Activated CD8-positive, alpha-beta T cell treated with anti-CD3 and anti-CD28 coated beads, Interleukin-2, amount 10 ng/mL, durations not matched to agents 7 days and 5 days (primary cell): ENCODE measurements at regions of chr18 and their contacts with region 1.

Region 1: GRCh38 chr18:62637807-62638687 is 77.3 kb upstream of the PHLPP1 start:
- DNase-seq: peak; percentile 63
- ATAC-seq: peak; percentile 79
- H3K4me3 Mint-ChIP-seq: no peak overlapping the region
- H3K27ac Mint-ChIP-seq: no peak overlapping the region
- H3K4me1 Mint-ChIP-seq: peaks cover 9% of the 10 kb centered on the region
- H3K27me3 Mint-ChIP-seq: peaks cover 19% of the 10 kb centered on the region

Region 2: GRCh38 chr18:62584241-62585120 is 53.6 kb before region 1 on chr18:
- CTCF ChIA-PET with region 1: interaction called, 10 read pairs
- POLR2A ChIA-PET with region 1: no interaction called
- DNase-seq: peak; percentile 90
- ATAC-seq: peak; percentile 91
- H3K4me3 Mint-ChIP-seq: peak overlapping the region; percentile 31
- H3K27ac Mint-ChIP-seq: peak overlapping the region; percentile 78
- H3K4me1 Mint-ChIP-seq: peaks cover 39% of the 10 kb centered on the region
- H3K27me3 Mint-ChIP-seq: no peaks in the 10 kb centered on the region

Region 3: DNA sequence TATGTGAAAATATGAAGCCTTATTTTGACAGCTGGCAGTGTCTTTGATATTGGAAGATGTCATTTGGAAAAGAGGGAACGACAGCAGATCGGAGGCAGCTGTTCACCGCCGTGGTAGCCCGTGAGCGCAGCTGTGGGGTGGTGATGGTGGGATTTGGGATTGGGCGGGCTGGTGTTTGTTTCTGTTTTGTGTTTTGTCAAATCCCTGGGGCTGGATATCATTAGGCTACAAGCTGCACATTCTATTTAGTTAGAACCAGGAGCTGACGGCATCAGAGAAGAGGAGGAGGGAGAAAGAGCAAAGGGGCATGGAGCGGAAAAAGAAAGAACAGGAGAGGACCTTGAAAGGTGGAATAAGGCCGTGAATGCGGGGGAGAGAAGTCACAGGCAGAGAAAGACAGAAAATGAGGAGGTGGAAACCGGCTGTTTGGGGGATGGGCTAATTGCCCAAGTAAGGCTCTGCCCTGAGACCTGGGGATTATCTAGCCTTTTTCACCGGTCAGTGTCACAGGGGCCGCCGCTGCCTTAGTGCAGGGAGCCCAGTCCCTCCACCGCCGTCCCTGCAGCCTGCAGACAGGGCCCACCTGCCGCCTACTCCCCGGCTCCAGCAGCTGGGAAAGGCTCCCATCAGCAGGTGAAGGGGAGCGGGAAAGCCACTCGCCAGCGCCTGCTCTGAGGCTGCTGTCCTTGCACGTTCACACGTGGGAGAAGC is 27.2 kb before region 1 on chr18:
- CTCF ChIA-PET with region 1: no interaction called
- POLR2A ChIA-PET with region 1: no interaction called
- DNase-seq: no peak
- ATAC-seq: peak; percentile 27
- H3K4me3 Mint-ChIP-seq: no peak overlapping the region
- H3K27ac Mint-ChIP-seq: no peak overlapping the region
- H3K4me1 Mint-ChIP-seq: no peaks in the 10 kb centered on the region
- H3K27me3 Mint-ChIP-seq: peaks cover 24% of the 10 kb centered on the region

Region 4: DNA sequence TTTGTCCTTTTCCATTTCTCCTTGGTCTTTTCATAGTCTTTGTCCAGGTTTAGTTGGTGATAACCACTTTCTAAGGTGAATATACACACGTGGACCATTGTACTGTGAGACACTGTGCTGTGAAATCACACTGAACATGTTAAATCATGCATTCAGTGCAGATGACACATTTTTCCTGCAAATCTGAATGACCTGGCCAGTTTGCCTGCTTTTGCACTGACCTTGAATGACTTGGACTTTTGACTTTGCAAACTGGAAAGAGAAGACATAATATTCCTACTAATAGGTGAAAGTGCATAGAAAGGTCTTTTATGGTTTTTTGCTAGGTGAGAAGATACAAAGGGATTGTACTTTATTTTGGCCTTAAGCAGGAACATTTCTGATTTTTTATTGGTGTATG is 55.6 kb after region 1 on chr18:
- CTCF ChIA-PET with region 1: no interaction called
- POLR2A ChIA-PET with region 1: no interaction called
- DNase-seq: no peak
- ATAC-seq: no peak
- H3K4me3 Mint-ChIP-seq: no peak overlapping the region
- H3K27ac Mint-ChIP-seq: no peak overlapping the region
- H3K4me1 Mint-ChIP-seq: no peaks in the 10 kb centered on the region
- H3K27me3 Mint-ChIP-seq: peaks cover 12% of the 10 kb centered on the region

Region 5: GRCh38 chr18:62809900-62810299 is 171.9 kb after region 1 on chr18:
- CTCF ChIA-PET with region 1: no interaction called
- POLR2A ChIA-PET with region 1: no interaction called
- DNase-seq: no peak
- ATAC-seq: no peak
- H3K4me3 Mint-ChIP-seq: no peak overlapping the region
- H3K27ac Mint-ChIP-seq: no peak overlapping the region
- H3K4me1 Mint-ChIP-seq: no peaks in the 10 kb centered on the region
- H3K27me3 Mint-ChIP-seq: peaks cover 2% of the 10 kb centered on the region

Region 6: DNA sequence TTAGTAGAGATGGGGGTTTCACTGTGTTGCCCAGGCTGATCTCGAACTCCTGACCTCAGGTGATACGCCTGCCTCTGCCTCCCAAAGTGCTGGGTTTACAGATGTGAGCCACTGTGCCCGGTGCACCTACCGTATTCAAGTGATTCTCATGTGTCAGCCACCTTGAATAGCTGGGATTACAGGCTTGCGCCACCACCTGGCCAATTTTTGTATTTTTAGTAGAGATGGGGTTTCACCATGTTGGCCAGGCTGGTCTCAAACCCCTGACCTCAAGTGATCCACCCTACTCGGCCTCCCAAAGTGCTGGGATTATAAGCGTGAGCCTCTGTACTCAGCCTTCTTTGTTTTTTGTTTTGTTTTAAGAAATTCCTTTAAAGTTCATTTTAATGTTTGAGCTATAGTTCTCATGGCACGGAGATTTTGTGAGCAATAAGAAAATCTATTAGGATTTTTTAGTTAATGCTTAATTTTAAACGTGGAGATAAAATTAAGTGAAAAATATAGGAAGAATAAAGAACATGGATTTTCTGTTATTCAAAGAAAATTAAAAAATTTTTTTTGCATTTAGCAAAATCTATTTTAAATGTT is 319.9 kb after region 1 on chr18:
- CTCF ChIA-PET with region 1: interaction called, 31 read pairs
- POLR2A ChIA-PET with region 1: no interaction called
- DNase-seq: peak; percentile 61
- ATAC-seq: peak; percentile 63
- H3K4me3 Mint-ChIP-seq: no peak overlapping the region
- H3K27ac Mint-ChIP-seq: no peak overlapping the region
- H3K4me1 Mint-ChIP-seq: peaks cover 15% of the 10 kb centered on the region
- H3K27me3 Mint-ChIP-seq: no peaks in the 10 kb centered on the region